ENCODE measurements at regions of chrX and their contacts with region 1.

Region 1: DNA sequence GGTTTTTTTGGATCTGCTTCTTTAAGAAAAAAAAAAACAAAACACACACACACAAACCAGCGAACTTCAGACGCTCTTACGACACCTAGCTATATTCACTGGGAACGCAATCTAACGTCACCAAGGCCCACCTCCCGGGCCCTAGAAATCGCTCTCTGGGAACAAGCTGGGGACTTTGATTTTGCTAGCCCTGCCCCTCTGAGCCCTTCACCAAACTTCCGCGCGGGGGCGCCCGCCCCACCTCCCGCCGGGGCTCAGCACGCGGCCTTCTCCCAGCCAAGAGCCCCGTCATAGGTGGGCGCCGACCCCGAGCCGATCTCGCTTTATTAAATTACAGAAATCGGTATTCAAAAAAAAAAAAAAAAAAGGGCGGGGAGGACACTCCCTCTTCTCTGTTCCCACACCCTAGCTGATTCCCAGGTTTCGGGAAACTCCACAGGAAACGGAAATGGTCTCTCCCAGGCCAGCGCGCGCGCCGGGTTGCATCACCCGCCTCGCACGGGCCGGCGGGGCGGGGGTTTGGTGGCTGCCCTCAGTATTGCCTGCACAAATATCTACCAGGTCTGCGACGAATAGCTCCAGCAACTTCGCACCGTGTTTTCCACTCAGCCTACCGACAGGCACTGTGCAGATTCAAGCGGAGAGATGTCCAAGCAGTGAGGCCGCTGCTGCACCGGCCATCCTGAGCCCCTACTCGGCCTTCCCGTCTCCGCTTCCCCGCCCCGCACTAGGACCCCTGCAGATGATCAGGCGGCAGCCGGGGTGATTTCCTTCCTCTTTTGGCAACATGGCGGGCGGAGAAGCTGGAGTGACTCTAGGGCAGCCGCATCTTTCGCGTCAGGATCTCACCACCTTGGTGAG is at the start of gene EIF2S3:
- DNase-seq: peak; percentile 74 to 93 (median 84)
- ATAC-seq: peak; percentile 86 to 88 (median 88)
- H3K4me3 ChIP-seq: peak within 1 kb of the TSS; percentile 85 to 88
- H3K4me3 Mint-ChIP-seq: peak within 1 kb of the TSS in 1 of 3 donors; percentile 96
- H3K27ac ChIP-seq: peak within 1 kb of the TSS; percentile 91
- H3K27ac Mint-ChIP-seq: peak within 1 kb of the TSS; percentile 99 to 100
- H3K4me1 ChIP-seq: peaks cover 2 to 3% of the 10 kb centered on the region in 2 experiments
- H3K4me1 Mint-ChIP-seq: peaks cover 0 to 16% (median 12%) of the 10 kb centered on the region in 3 donors
- H3K27me3 ChIP-seq: no peaks in the 10 kb centered on the region
- H3K27me3 Mint-ChIP-seq: no peaks in the 10 kb centered on the region
- total RNA-seq, gene EIF2S3: 180 to 309 (median 196) TPM

Region 2: GRCh38 chrX:23782863-23783568 is 271.4 kb before region 1 on chrX and contains the start of gene SAT1:
- CTCF ChIA-PET with region 1: interaction called in 1 of 2 experiments, 14 read pairs
- POLR2A ChIA-PET with region 1: interaction called in 1 of 2 experiments, 21 read pairs
- DNase-seq: peak; percentile 82 to 95 (median 92)
- ATAC-seq: peak; percentile 90 to 95 (median 94)
- H3K4me3 ChIP-seq: peak within 1 kb of the TSS; percentile 62 to 90
- H3K4me3 Mint-ChIP-seq: peak within 1 kb of the TSS; percentile 94 to 95 (median 94)
- H3K27ac ChIP-seq: peak within 1 kb of the TSS; percentile 93
- H3K27ac Mint-ChIP-seq: peak within 1 kb of the TSS; percentile 95
- H3K4me1 ChIP-seq: peaks cover 14 to 18% of the 10 kb centered on the region in 2 experiments
- H3K4me1 Mint-ChIP-seq: peaks cover 34 to 40% (median 40%) of the 10 kb centered on the region in 3 donors
- H3K27me3 ChIP-seq: no peaks in the 10 kb centered on the region
- H3K27me3 Mint-ChIP-seq: no peaks in the 10 kb centered on the region
- total RNA-seq, gene SAT1: 89.6 to 258 (median 94.4) TPM

Region 3: DNA sequence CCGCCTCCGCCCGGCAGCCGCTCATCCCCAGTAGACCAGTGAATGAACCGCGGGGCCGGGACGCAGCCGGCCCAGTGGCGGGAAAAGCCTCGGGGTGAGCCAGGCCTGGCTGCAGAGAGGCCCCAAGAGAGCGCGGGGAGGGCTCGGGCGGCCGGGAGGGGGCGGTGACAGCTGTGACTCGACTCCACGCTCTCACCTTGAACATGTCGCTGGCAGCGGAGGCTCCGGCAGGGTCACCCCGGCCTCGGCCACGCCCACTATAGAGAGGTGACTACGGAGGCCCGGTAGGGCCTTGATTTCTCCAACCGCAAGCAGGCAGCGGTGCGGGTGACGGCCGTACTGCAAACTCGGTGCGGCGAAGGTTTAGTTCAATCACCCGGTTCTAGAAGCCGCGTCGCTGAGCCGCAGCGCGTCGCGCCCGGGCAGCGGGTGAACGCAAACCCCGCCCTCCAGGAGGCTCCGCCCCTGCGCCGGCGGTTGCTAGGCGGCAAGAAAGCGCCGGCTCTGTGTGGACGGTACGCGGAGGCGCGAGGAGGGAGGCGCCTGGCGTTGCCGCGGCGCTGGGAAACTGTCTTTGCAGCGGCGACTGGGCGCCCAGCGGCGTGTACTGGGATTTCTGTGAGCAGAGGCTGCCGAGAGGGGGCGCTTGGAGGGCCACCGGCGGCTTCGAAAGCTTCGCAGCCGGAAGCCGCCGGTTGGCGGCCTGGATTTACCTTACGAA is 146.8 kb before region 1 on chrX and contains the starts of genes APOO and CXorf58:
- CTCF ChIA-PET with region 1: interaction called in 1 of 2 experiments, 33 read pairs
- POLR2A ChIA-PET with region 1: interaction called, 3 to 17 read pairs
- DNase-seq: peak; percentile 76 to 94 (median 89)
- ATAC-seq: peak; percentile 93 to 96 (median 95)
- H3K4me3 ChIP-seq: peak within 1 kb of the TSS; percentile 49 to 61
- H3K4me3 Mint-ChIP-seq: peak within 1 kb of the TSS; percentile 78 to 82 (median 79)
- H3K27ac ChIP-seq: peak within 1 kb of the TSS; percentile 92
- H3K27ac Mint-ChIP-seq: peak within 1 kb of the TSS; percentile 89 to 90
- H3K4me1 ChIP-seq: peaks cover 4 to 10% of the 10 kb centered on the region in 2 experiments
- H3K4me1 Mint-ChIP-seq: peaks cover 7 to 16% (median 14%) of the 10 kb centered on the region in 3 donors
- H3K27me3 ChIP-seq: no peaks in the 10 kb centered on the region
- H3K27me3 Mint-ChIP-seq: peaks cover 0 to 4% of the 10 kb centered on the region in 2 donors
- total RNA-seq, gene APOO: 5.2 to 16.5 (median 6.4) TPM
- total RNA-seq, gene CXorf58: not detected

Region 4: GRCh38 chrX:24144528-24144927 is 90.1 kb after region 1 on chrX:
- CTCF ChIA-PET with region 1: interaction called in 1 of 2 experiments, 5 read pairs
- POLR2A ChIA-PET with region 1: interaction called, 10 read pairs
- DNase-seq: no peak
- ATAC-seq: no peak
- H3K4me3 ChIP-seq: no peak overlapping the region
- H3K4me3 Mint-ChIP-seq: no peak overlapping the region
- H3K27ac ChIP-seq: no peak overlapping the region
- H3K27ac Mint-ChIP-seq: no peak overlapping the region
- H3K4me1 ChIP-seq: peaks cover 6 to 16% of the 10 kb centered on the region in 2 experiments
- H3K4me1 Mint-ChIP-seq: peaks cover 37 to 40% (median 39%) of the 10 kb centered on the region in 3 donors
- H3K27me3 ChIP-seq: no peaks in the 10 kb centered on the region
- H3K27me3 Mint-ChIP-seq: no peaks in the 10 kb centered on the region

Region 5: DNA sequence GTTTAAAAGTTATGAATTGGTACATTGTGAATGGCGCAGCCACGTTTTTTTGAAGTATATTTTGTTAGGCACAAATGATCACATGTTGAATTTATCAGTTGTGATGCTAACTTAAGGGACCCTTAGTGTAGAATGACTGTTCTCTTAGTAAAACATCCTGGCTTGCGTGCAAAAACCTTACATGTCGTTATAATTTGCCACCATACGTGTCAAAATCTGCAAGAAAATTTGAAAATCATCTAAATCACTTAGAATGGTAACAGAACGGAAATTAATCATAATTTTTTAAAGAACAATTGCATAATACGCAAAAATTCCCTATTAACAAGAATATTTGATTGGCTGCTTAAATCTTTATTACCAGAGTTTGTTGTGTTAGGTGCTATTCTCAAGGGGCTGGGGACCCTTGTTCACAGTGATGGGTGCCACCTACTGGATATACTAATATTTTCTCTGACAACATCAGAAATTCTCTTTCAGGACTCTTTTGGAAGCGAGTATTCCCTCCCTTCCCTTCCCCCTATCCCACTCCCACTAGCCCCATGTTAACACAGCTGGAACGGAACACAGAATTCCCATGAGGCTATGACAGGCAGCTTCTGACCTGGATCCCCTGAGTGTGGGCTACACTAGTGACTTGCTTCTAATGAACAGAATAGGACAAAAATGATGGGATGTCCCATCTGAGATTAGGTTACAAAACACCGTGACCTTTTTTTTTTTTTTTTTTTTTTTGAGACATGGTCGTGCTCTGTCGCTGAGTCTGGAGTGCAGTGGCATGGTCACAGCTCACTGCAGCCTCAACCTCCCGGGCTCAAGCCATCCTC is 187.6 kb after region 1 on chrX:
- CTCF ChIA-PET with region 1: interaction called in 1 of 2 experiments, 10 read pairs
- POLR2A ChIA-PET with region 1: no interaction called
- DNase-seq: peak in 2 of 35 experiments; percentile 6 to 49
- ATAC-seq: peak in 1 of 4 experiments; percentile 35
- H3K4me3 ChIP-seq: no peak overlapping the region
- H3K4me3 Mint-ChIP-seq: no peak overlapping the region
- H3K27ac ChIP-seq: no peak overlapping the region
- H3K27ac Mint-ChIP-seq: no peak overlapping the region
- H3K4me1 ChIP-seq: no peaks in the 10 kb centered on the region
- H3K4me1 Mint-ChIP-seq: no peaks in the 10 kb centered on the region
- H3K27me3 ChIP-seq: no peaks in the 10 kb centered on the region
- H3K27me3 Mint-ChIP-seq: peaks cover 3 to 15% of the 10 kb centered on the region in 2 donors

Region 6: GRCh38 chrX:25344161-25344936 is 1289.9 kb after region 1 on chrX:
- CTCF ChIA-PET with region 1: no interaction called
- POLR2A ChIA-PET with region 1: no interaction called
- DNase-seq: no peak
- ATAC-seq: no peak
- H3K4me3 ChIP-seq: no peak overlapping the region
- H3K4me3 Mint-ChIP-seq: no peak overlapping the region
- H3K27ac ChIP-seq: no peak overlapping the region
- H3K27ac Mint-ChIP-seq: no peak overlapping the region
- H3K4me1 ChIP-seq: no peaks in the 10 kb centered on the region
- H3K4me1 Mint-ChIP-seq: no peaks in the 10 kb centered on the region
- H3K27me3 ChIP-seq: no peaks in the 10 kb centered on the region
- H3K27me3 Mint-ChIP-seq: no peaks in the 10 kb centered on the region

Measured in T-cell (primary cell).